MCF 10A (cell line): ENCODE measurements at regions of chr14 and their contacts with region 1.

Region 1: DNA sequence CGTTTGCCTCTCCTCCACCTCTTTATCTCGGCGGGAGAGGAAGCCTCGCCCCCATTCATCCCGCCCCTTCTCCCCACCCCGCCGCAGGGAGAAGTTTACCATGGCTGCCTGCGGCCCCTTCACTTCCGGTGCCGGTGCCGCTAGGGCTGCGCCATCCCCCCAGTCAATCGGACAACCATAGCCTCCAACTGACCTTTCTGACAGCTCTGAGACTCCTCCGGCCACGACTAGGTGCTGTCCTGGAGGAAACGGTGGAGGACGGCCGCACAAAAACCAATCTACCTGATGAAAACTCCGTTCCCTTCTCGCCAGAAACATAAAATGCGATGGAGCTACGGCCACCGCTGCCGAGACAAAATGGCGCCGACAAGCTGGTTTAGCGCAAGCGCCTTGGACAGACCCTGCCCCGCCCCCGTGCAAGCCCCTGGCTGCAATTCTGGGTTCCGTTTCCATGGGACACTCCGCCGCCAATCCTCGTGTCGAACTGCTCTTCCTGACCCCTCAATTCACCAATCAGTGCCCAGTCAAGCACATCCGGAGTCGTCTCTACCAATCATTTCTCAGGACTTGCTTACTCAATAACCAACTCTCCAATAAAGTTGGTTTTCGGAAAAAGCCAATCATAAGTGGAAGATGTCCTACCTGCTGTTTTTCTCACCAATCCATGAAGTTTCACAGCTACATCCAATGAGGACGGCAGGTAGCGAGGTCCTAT is 436 bp upstream of the ARID4A start:
- DNase-seq: peak; percentile 100
- H3K4me3 Mint-ChIP-seq: no peak overlapping the region
- H3K27ac Mint-ChIP-seq: no peak overlapping the region
- H3K4me1 Mint-ChIP-seq: no peaks in the 10 kb centered on the region
- H3K27me3 Mint-ChIP-seq: no peaks in the 10 kb centered on the region
- CTCF ChIP-seq: peak; percentile 11

Region 2: DNA sequence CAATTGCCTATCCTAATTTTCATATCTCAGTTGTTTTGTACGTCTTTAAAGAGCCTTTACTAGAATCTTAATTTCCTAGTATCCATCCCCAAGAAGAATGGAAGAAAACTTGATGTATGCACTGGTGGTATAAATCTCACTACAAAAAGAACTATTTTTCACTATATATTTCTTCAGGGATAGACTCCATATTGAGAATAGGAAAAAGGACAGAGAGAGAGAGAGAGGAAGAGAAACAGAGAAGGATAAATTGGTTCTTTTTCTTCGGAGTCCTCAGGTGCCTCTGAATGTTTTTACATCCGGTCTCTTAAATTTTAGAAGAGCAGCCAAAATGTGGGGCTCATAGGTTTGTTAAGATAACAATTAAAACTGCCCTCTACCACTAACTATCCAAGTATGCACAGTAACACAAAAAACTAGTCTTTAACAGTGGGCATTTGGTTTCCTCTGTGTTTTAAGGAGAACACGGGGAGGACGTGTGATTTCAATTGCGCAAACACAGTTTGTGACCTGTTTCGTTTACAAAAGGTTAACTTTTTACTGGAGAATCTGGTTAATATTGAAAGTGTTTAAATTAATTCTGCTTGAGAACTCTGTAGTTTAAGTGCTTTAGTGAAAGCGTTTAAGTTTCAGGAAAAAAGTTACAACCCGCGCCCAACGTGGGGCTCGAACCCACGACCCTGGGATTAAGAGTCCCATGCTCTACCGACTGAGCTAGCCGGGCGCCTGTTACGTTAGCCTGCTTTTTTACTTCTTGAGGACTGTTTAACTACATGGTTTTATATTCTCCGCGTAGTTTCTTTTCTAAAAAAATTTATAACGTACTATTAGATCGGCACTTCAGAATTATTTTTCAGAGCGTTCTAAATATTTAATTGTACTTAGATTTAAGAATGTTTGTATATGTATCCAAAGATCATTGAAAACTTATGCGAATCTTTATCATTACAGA is 58.4 kb before region 1 on chr14:
- CTCF ChIA-PET with region 1: no interaction called
- POLR2A ChIA-PET with region 1: interaction called, 134 read pairs
- intact Hi-C with region 1: loop called (anchors 2 kb)
- DNase-seq: peak; percentile 66
- H3K4me3 Mint-ChIP-seq: no peak overlapping the region
- H3K27ac Mint-ChIP-seq: no peak overlapping the region
- H3K4me1 Mint-ChIP-seq: peaks cover 7% of the 10 kb centered on the region
- H3K27me3 Mint-ChIP-seq: no peaks in the 10 kb centered on the region
- CTCF ChIP-seq: no peak

Region 3: DNA sequence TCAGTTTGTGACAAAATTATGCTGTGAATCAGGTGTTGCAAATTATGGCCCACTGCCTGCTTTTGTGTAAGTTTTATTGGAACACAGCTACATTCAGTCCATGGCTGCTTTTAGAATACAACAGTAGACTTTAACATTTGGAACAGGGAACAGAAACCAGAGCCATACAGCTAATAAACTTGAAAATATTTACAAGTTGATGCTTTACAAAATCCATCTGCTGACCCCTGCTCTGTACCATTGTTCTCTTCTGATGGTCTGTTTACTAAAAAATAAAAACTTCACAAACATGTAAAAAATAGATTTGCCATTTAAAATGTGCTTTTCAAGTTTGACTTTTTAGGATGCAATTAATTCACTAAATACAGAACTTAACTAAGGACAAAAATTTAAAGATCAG is 32.5 kb before region 1 on chr14:
- CTCF ChIA-PET with region 1: interaction called, 4 read pairs
- POLR2A ChIA-PET with region 1: interaction called, 19 read pairs
- intact Hi-C with region 1: no loop called
- DNase-seq: no peak
- H3K4me3 Mint-ChIP-seq: no peak overlapping the region
- H3K27ac Mint-ChIP-seq: peak overlapping the region; percentile 63
- H3K4me1 Mint-ChIP-seq: peaks cover 4% of the 10 kb centered on the region
- H3K27me3 Mint-ChIP-seq: no peaks in the 10 kb centered on the region
- CTCF ChIP-seq: no peak

Region 4: GRCh38 chr14:58280954-58281787 is 16.7 kb before region 1 on chr14:
- CTCF ChIA-PET with region 1: interaction called, 3 read pairs
- POLR2A ChIA-PET with region 1: interaction called, 88 read pairs
- intact Hi-C with region 1: no loop called
- DNase-seq: peak; percentile 67
- H3K4me3 Mint-ChIP-seq: peak overlapping the region; percentile 43
- H3K27ac Mint-ChIP-seq: peak overlapping the region; percentile 97
- H3K4me1 Mint-ChIP-seq: peaks cover 42% of the 10 kb centered on the region
- H3K27me3 Mint-ChIP-seq: no peaks in the 10 kb centered on the region
- CTCF ChIP-seq: no peak

Region 5: DNA sequence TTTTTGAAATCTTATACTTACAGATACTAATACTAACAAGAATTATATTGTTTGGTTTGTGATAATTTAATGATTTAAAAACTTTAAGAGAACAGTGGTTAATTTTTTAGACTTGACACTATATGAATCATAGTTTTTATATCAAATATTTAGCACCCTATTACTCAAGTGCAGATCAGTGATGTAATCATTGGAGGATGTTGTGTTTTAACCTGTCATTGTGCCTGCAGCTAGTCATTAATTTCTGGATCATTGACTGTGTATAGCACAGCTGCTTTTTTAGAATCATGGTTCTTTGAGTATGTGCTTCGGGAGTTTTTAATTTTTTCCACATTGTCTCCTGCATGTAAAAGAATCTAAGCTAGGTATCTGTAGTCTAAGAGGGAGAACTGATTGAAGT is 17.7 kb after region 1 on chr14:
- CTCF ChIA-PET with region 1: no interaction called
- POLR2A ChIA-PET with region 1: interaction called, 52 read pairs
- intact Hi-C with region 1: no loop called
- DNase-seq: peak; percentile 60
- H3K4me3 Mint-ChIP-seq: no peak overlapping the region
- H3K27ac Mint-ChIP-seq: no peak overlapping the region
- H3K4me1 Mint-ChIP-seq: peaks cover 7% of the 10 kb centered on the region
- H3K27me3 Mint-ChIP-seq: no peaks in the 10 kb centered on the region
- CTCF ChIP-seq: no peak

Region 6: GRCh38 chr14:58353516-58354299 is 55.8 kb after region 1 on chr14:
- CTCF ChIA-PET with region 1: no interaction called
- POLR2A ChIA-PET with region 1: interaction called, 17 read pairs
- intact Hi-C with region 1: no loop called
- DNase-seq: peak; percentile 4
- H3K4me3 Mint-ChIP-seq: peak overlapping the region; percentile 66
- H3K27ac Mint-ChIP-seq: peak overlapping the region; percentile 77
- H3K4me1 Mint-ChIP-seq: peaks cover 9% of the 10 kb centered on the region
- H3K27me3 Mint-ChIP-seq: no peaks in the 10 kb centered on the region
- CTCF ChIP-seq: no peak

Region 7: GRCh38 chr14:58427281-58428117 is 129.6 kb after region 1 on chr14 and contains the starts of genes KIAA0586 and TIMM9:
- CTCF ChIA-PET with region 1: no interaction called
- POLR2A ChIA-PET with region 1: interaction called, 75 read pairs
- intact Hi-C with region 1: no loop called
- DNase-seq: peak; percentile 99
- H3K4me3 Mint-ChIP-seq: peak within 1 kb of the TSS; percentile 85
- H3K27ac Mint-ChIP-seq: peak within 1 kb of the TSS; percentile 96
- H3K4me1 Mint-ChIP-seq: peaks cover 22% of the 10 kb centered on the region
- H3K27me3 Mint-ChIP-seq: no peaks in the 10 kb centered on the region
- CTCF ChIP-seq: no peak
- total RNA-seq, gene KIAA0586: 19.6 and 26.2 TPM in 2 replicates
- total RNA-seq, gene TIMM9: 52.8 and 102 TPM in 2 replicates